ENCODE measurements at regions of chr6 and their contacts with region 1.

Region 1: GRCh38 chr6:154868143-154868594 is 126.9 kb upstream of the TIAM2 start:
- DNase-seq: no peak
- H3K4me3 Mint-ChIP-seq: no peak overlapping the region
- H3K27ac Mint-ChIP-seq: no peak overlapping the region
- H3K4me1 Mint-ChIP-seq: peaks cover 6% of the 10 kb centered on the region
- H3K27me3 Mint-ChIP-seq: no peaks in the 10 kb centered on the region

Region 2: GRCh38 chr6:154721460-154721859 is 146.7 kb before region 1 on chr6:
- intact Hi-C with region 1: no loop called
- DNase-seq: no peak
- H3K4me3 Mint-ChIP-seq: no peak overlapping the region
- H3K27ac Mint-ChIP-seq: no peak overlapping the region
- H3K4me1 Mint-ChIP-seq: no peaks in the 10 kb centered on the region
- H3K27me3 Mint-ChIP-seq: peaks cover 5% of the 10 kb centered on the region

Region 3: GRCh38 chr6:155079985-155080452 is 211.8 kb after region 1 on chr6:
- intact Hi-C with region 1: no loop called
- DNase-seq: no peak
- H3K4me3 Mint-ChIP-seq: peak overlapping the region; percentile 11
- H3K27ac Mint-ChIP-seq: peak overlapping the region; percentile 79
- H3K4me1 Mint-ChIP-seq: peaks cover 50% of the 10 kb centered on the region
- H3K27me3 Mint-ChIP-seq: peaks cover 2% of the 10 kb centered on the region

Region 4: DNA sequence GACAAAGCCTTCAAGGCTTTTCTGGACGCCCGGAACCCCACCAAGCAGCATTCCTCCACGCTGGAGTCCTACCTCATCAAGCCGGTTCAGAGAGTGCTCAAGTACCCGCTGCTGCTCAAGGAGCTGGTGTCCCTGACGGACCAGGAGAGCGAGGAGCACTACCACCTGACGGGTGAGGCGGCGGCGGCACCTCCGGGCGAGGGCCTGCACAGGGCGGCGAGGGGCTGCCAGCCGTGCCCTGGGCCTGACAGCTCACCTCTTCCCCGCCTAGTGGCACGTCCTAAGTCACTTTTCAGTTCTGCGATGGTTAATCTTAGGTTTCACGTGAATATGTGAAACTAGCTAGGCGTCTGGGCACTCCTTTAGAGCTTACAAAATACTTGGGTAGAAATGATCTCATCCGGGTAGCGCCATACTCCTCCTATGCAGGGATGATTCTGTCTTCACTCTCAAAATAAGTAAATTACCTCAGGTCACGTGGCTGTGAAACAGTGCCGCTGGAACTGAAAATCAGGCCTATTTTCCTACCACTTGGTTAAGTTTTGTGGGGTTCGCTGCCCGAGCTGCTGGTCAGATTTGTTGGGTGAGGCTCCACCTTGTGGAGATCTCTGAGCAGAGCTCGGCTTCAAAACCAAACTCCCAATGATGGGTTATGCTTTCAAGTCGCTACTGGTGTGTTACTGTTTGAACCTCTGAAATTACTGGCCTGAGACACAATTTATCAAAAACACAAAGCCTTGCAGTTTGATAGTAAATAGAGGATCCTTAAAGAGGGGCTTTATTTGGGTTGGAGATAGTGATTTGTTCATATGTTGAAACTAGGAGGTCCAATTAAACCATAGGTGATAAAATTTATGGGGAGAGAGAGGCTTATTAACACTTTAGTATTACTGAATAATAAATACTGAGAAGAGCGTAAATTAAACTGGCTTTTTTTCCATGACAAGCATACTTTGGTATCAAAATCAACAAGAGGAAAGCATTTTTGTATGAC is 380.1 kb after region 1 on chr6:
- intact Hi-C with region 1: loop called (anchors 2 kb)
- DNase-seq: no peak
- H3K4me3 Mint-ChIP-seq: no peak overlapping the region
- H3K27ac Mint-ChIP-seq: no peak overlapping the region
- H3K4me1 Mint-ChIP-seq: peaks cover 6% of the 10 kb centered on the region
- H3K27me3 Mint-ChIP-seq: no peaks in the 10 kb centered on the region

Region 5: GRCh38 chr6:155530219-155530834 is 662.2 kb after region 1 on chr6:
- intact Hi-C with region 1: loop called (anchors 2 kb)
- DNase-seq: no peak
- H3K4me3 Mint-ChIP-seq: no peak overlapping the region
- H3K27ac Mint-ChIP-seq: no peak overlapping the region
- H3K4me1 Mint-ChIP-seq: peaks cover 10% of the 10 kb centered on the region
- H3K27me3 Mint-ChIP-seq: peaks cover 4% of the 10 kb centered on the region